ENCODE measurements at regions of chr9 and their contacts with region 1.

Region 1: GRCh38 chr9:16901589-16901988 is 31.1 kb upstream of the BNC2 start:
- DNase-seq: no peak
- ATAC-seq: no peak
- H3K4me3 ChIP-seq: no peak overlapping the region
- H3K27ac ChIP-seq: no peak overlapping the region
- H3K4me1 ChIP-seq: no peaks in the 10 kb centered on the region
- H3K27me3 ChIP-seq: no peaks in the 10 kb centered on the region
- CTCF ChIP-seq: no peak

Region 2: GRCh38 chr9:16985559-16986348 is 84.2 kb after region 1 on chr9:
- intact Hi-C with region 1: loop called in 1 of 2 experiments (anchors 10 kb)
- DNase-seq: peak in 1 of 2 donors; percentile 22
- ATAC-seq: peak in 2 of 4 donors; percentile 37 to 50
- H3K4me3 ChIP-seq: no peak overlapping the region
- H3K27ac ChIP-seq: no peak overlapping the region
- H3K4me1 ChIP-seq: peaks cover 10% of the 10 kb centered on the region
- H3K27me3 ChIP-seq: no peaks in the 10 kb centered on the region
- CTCF ChIP-seq: no peak